Naive thymus-derived CD4-positive, alpha-beta T cell (primary cell): ENCODE measurements at regions of chr9 and their contacts with region 1.

Region 1: DNA sequence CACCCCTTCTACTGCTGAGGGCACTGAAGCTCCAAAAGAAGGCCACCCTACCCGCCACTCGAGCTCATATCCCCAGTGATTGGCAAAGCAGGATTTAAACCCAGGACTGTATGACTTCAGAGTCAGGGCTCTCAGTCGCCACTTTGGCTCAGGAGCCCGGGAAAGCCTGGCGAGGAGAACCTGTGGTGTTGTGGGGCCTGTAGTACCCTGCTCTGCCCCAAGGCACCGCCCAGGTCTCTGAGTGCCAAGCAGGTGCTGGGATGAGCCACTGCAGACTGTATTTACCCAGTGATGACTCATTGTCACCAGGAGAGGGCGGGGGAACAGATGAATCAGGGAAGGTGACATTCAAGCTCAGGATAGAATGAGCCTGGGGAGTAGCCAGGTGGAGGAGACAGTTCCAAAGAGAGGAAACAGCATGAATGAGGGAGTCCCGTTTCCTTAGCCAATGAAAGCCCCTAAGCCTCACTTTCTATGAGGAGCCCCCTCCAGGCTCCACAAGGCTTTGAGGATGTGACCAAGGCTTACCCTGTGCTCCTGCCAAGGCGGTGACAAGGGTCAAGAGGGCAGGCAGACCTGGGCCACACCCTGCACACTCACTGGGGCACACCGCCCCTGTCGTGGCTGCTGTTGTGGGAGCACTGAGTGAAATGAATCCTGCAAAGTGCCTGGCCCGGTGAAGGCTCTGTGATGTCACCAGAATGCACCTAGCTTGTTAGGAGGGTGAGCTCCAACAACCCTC is 17.8 kb upstream of the DPM2 start:
- DNase-seq: peak in 8 of 9 donors; percentile 64 to 86 (median 70)
- ATAC-seq: peak; percentile 93
- H3K4me3 ChIP-seq: peak overlapping the region; percentile 41
- H3K4me3 Mint-ChIP-seq: peak overlapping the region; percentile 74 to 92 (median 82)
- H3K27ac ChIP-seq: peak overlapping the region; percentile 84
- H3K27ac Mint-ChIP-seq: peak overlapping the region; percentile 66 to 98 (median 93)
- H3K4me1 ChIP-seq: peaks cover 72 to 91% of the 10 kb centered on the region in 2 donors
- H3K4me1 Mint-ChIP-seq: peaks cover 65 to 96% (median 84%) of the 10 kb centered on the region in 7 donors
- H3K27me3 ChIP-seq: no peaks in the 10 kb centered on the region
- H3K27me3 Mint-ChIP-seq: no peaks in the 10 kb centered on the region

Region 2: DNA sequence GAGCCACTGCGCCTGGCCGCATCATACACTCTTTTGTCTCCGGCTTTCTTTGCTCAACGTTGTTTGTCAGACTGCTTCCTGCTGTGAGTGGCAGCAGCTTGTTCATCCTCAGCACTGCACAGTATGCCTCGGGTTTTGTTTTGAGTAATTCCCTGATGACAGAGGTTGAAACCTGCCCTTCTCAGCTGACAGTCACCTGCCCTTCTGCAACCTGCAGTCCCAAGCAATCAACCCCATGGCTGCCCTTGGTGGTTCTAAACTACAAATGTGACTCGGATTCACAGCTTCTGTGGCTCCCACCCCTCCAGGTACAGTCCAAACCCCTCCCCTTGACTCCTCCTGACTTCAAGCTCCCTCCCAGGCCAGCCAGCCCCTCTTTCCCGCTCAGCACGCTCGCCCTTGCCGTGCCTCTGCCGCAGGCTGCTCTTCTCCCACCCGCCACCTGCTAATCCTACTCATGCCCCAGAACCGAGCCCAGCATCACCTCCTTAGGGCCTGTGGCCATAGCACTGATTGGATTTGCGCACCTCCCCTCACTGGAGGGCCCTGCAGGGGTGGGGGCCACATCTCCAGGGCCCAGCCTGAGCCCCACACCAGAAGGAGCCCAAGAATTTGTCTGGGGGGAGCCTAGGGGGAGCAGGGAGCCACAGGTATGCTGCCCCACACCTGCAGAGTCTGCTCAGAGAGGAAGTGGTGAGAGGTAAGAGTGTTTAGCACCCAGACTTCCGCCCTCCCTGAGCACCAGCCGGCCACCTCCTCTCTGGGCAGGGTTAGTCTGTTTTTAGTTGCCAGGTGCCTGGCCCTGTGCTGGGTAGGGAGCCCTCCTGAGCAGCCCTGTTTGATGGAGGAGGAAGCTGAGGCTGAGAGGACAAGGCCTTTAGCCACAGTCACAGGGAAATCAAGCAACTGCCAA is 15.2 kb after region 1 on chr9:
- CTCF ChIA-PET with region 1: interaction called, 55 read pairs
- POLR2A ChIA-PET with region 1: interaction called, 1,719 read pairs
- intact Hi-C with region 1: loop called (anchors 1 kb)
- DNase-seq: peak in 8 of 9 donors; percentile 68 to 84 (median 80)
- ATAC-seq: peak; percentile 72
- H3K4me3 ChIP-seq: peak overlapping the region; percentile 93
- H3K4me3 Mint-ChIP-seq: peak overlapping the region; percentile 89 to 99 (median 96)
- H3K27ac ChIP-seq: peak overlapping the region; percentile 84
- H3K27ac Mint-ChIP-seq: peak overlapping the region; percentile 90 to 99 (median 97)
- H3K4me1 ChIP-seq: peaks cover 61 to 93% of the 10 kb centered on the region in 2 donors
- H3K4me1 Mint-ChIP-seq: peaks cover 69 to 95% (median 83%) of the 10 kb centered on the region in 7 donors
- H3K27me3 ChIP-seq: no peaks in the 10 kb centered on the region
- H3K27me3 Mint-ChIP-seq: no peaks in the 10 kb centered on the region

Region 3: GRCh38 chr9:128007566-128008138 is 52.2 kb after region 1 on chr9:
- CTCF ChIA-PET with region 1: interaction called, 3 read pairs
- POLR2A ChIA-PET with region 1: interaction called, 1,719 read pairs
- intact Hi-C with region 1: loop called in 1 of 2 experiments (anchors 1 kb)
- DNase-seq: peak; percentile 61 to 97 (median 96)
- ATAC-seq: peak; percentile 95
- H3K4me3 ChIP-seq: peak overlapping the region; percentile 48
- H3K4me3 Mint-ChIP-seq: peak overlapping the region; percentile 76 to 87 (median 86)
- H3K27ac ChIP-seq: peak overlapping the region; percentile 66
- H3K27ac Mint-ChIP-seq: peak overlapping the region; percentile 93 to 100 (median 98)
- H3K4me1 ChIP-seq: peaks cover 39 to 76% of the 10 kb centered on the region in 2 donors
- H3K4me1 Mint-ChIP-seq: peaks cover 28 to 93% (median 65%) of the 10 kb centered on the region in 7 donors
- H3K27me3 ChIP-seq: no peaks in the 10 kb centered on the region
- H3K27me3 Mint-ChIP-seq: peaks cover 0 to 3% (median 0%) of the 10 kb centered on the region in 5 donors

Region 4: GRCh38 chr9:128094166-128094967 is 138.9 kb after region 1 on chr9:
- CTCF ChIA-PET with region 1: interaction called, 5 read pairs
- POLR2A ChIA-PET with region 1: no interaction called
- intact Hi-C with region 1: loop called in 1 of 2 experiments (anchors 5 kb)
- DNase-seq: peak; percentile 38 to 85 (median 71)
- ATAC-seq: peak; percentile 83
- H3K4me3 ChIP-seq: no peak overlapping the region
- H3K4me3 Mint-ChIP-seq: peak overlapping the region; percentile 39 to 83 (median 72)
- H3K27ac ChIP-seq: peak overlapping the region; percentile 71
- H3K27ac Mint-ChIP-seq: peak overlapping the region; percentile 86 to 99 (median 96)
- H3K4me1 ChIP-seq: peaks cover 18 to 72% of the 10 kb centered on the region in 2 donors
- H3K4me1 Mint-ChIP-seq: peaks cover 50 to 85% (median 72%) of the 10 kb centered on the region in 7 donors
- H3K27me3 ChIP-seq: no peaks in the 10 kb centered on the region
- H3K27me3 Mint-ChIP-seq: no peaks in the 10 kb centered on the region

Region 5: GRCh38 chr9:128162215-128163026 is 207.0 kb after region 1 on chr9:
- CTCF ChIA-PET with region 1: no interaction called
- POLR2A ChIA-PET with region 1: no interaction called
- intact Hi-C with region 1: no loop called
- DNase-seq: no peak
- ATAC-seq: no peak
- H3K4me3 ChIP-seq: no peak overlapping the region
- H3K4me3 Mint-ChIP-seq: peak overlapping the region in 8 of 10 donors; percentile 4 to 86 (median 46)
- H3K27ac ChIP-seq: no peak overlapping the region
- H3K27ac Mint-ChIP-seq: peak overlapping the region in 6 of 9 donors; percentile 5 to 94 (median 24)
- H3K4me1 ChIP-seq: peaks cover 11 to 12% of the 10 kb centered on the region in 2 donors
- H3K4me1 Mint-ChIP-seq: peaks cover 0 to 30% (median 21%) of the 10 kb centered on the region in 7 donors
- H3K27me3 ChIP-seq: no peaks in the 10 kb centered on the region
- H3K27me3 Mint-ChIP-seq: no peaks in the 10 kb centered on the region